ENCODE measurements at regions of chr22 and their contacts with region 1.

Region 1: GRCh38 chr22:30667494-30668385 is at the start of gene DUSP18:
- DNase-seq: peak; percentile 87 to 95 (median 92)
- ATAC-seq: peak; percentile 96
- H3K4me3 ChIP-seq: peak within 1 kb of the TSS; percentile 98
- H3K4me3 Mint-ChIP-seq: peak within 1 kb of the TSS; percentile 90 to 98 (median 95)
- H3K27ac ChIP-seq: peak within 1 kb of the TSS; percentile 71
- H3K27ac Mint-ChIP-seq: peak within 1 kb of the TSS; percentile 74 to 97 (median 91)
- H3K4me1 ChIP-seq: peaks cover 4 to 6% of the 10 kb centered on the region in 2 donors
- H3K4me1 Mint-ChIP-seq: peaks cover 17 to 30% (median 24%) of the 10 kb centered on the region in 7 donors
- H3K27me3 ChIP-seq: no peaks in the 10 kb centered on the region
- H3K27me3 Mint-ChIP-seq: peaks cover 0 to 4% (median 0%) of the 10 kb centered on the region in 5 donors
- total RNA-seq, gene DUSP18: 7.4 to 18.5 (median 14.1) TPM

Region 2: GRCh38 chr22:29837780-29838598 is 829.8 kb before region 1 on chr22 and contains the start of gene ASCC2:
- CTCF ChIA-PET with region 1: no interaction called
- POLR2A ChIA-PET with region 1: no interaction called
- intact Hi-C with region 1: loop called in 1 of 2 experiments (anchors 1 kb)
- DNase-seq: peak; percentile 93 to 98 (median 97)
- ATAC-seq: peak; percentile 100
- H3K4me3 ChIP-seq: peak within 1 kb of the TSS; percentile 98
- H3K4me3 Mint-ChIP-seq: peak within 1 kb of the TSS; percentile 89 to 99 (median 95)
- H3K27ac ChIP-seq: peak within 1 kb of the TSS; percentile 79
- H3K27ac Mint-ChIP-seq: peak within 1 kb of the TSS; percentile 94 to 99 (median 95)
- H3K4me1 ChIP-seq: peaks cover 12 to 22% of the 10 kb centered on the region in 2 donors
- H3K4me1 Mint-ChIP-seq: peaks cover 31 to 55% (median 45%) of the 10 kb centered on the region in 7 donors
- H3K27me3 ChIP-seq: no peaks in the 10 kb centered on the region
- H3K27me3 Mint-ChIP-seq: no peaks in the 10 kb centered on the region
- total RNA-seq, gene ASCC2: 90.2 to 101 (median 93.8) TPM

Region 3: GRCh38 chr22:30649430-30650007 is 18.2 kb before region 1 on chr22:
- CTCF ChIA-PET with region 1: no interaction called
- POLR2A ChIA-PET with region 1: interaction called, 3 read pairs
- intact Hi-C with region 1: loop called in 1 of 2 experiments (anchors 1 kb)
- DNase-seq: peak in 2 of 9 donors; percentile 16 to 88
- ATAC-seq: peak; percentile 95
- H3K4me3 ChIP-seq: no peak overlapping the region
- H3K4me3 Mint-ChIP-seq: peak overlapping the region in 1 of 10 donors; percentile 23
- H3K27ac ChIP-seq: no peak overlapping the region
- H3K27ac Mint-ChIP-seq: peak overlapping the region in 1 of 9 donors; percentile 87
- H3K4me1 ChIP-seq: no peaks in the 10 kb centered on the region
- H3K4me1 Mint-ChIP-seq: peaks cover 0 to 34% (median 0%) of the 10 kb centered on the region in 7 donors
- H3K27me3 ChIP-seq: no peaks in the 10 kb centered on the region
- H3K27me3 Mint-ChIP-seq: no peaks in the 10 kb centered on the region

Region 4: GRCh38 chr22:30694171-30694639 is 26.5 kb after region 1 on chr22:
- CTCF ChIA-PET with region 1: no interaction called
- POLR2A ChIA-PET with region 1: interaction called, 4 read pairs
- intact Hi-C with region 1: loop called (anchors 1 kb)
- DNase-seq: peak; percentile 40 to 62 (median 50)
- ATAC-seq: peak; percentile 83
- H3K4me3 ChIP-seq: peak overlapping the region; percentile 77
- H3K4me3 Mint-ChIP-seq: peak overlapping the region; percentile 86 to 98 (median 94)
- H3K27ac ChIP-seq: peak overlapping the region; percentile 57
- H3K27ac Mint-ChIP-seq: peak overlapping the region in 8 of 9 donors; percentile 59 to 92 (median 86)
- H3K4me1 ChIP-seq: peaks cover 6 to 7% of the 10 kb centered on the region in 2 donors
- H3K4me1 Mint-ChIP-seq: peaks cover 0 to 29% (median 19%) of the 10 kb centered on the region in 7 donors
- H3K27me3 ChIP-seq: no peaks in the 10 kb centered on the region
- H3K27me3 Mint-ChIP-seq: peaks cover 0 to 38% (median 4%) of the 10 kb centered on the region in 5 donors

Region 5: GRCh38 chr22:30754971-30755756 is 87.4 kb after region 1 on chr22:
- CTCF ChIA-PET with region 1: no interaction called
- POLR2A ChIA-PET with region 1: no interaction called
- intact Hi-C with region 1: loop called in 1 of 2 experiments (anchors 1 kb)
- DNase-seq: peak in 8 of 9 donors; percentile 12 to 44 (median 30)
- ATAC-seq: peak; percentile 67
- H3K4me3 ChIP-seq: no peak overlapping the region
- H3K4me3 Mint-ChIP-seq: no peak overlapping the region
- H3K27ac ChIP-seq: no peak overlapping the region
- H3K27ac Mint-ChIP-seq: no peak overlapping the region
- H3K4me1 ChIP-seq: no peaks in the 10 kb centered on the region
- H3K4me1 Mint-ChIP-seq: peaks cover 0 to 3% (median 0%) of the 10 kb centered on the region in 7 donors
- H3K27me3 ChIP-seq: no peaks in the 10 kb centered on the region
- H3K27me3 Mint-ChIP-seq: peaks cover 0 to 4% (median 0%) of the 10 kb centered on the region in 5 donors

Region 6: DNA sequence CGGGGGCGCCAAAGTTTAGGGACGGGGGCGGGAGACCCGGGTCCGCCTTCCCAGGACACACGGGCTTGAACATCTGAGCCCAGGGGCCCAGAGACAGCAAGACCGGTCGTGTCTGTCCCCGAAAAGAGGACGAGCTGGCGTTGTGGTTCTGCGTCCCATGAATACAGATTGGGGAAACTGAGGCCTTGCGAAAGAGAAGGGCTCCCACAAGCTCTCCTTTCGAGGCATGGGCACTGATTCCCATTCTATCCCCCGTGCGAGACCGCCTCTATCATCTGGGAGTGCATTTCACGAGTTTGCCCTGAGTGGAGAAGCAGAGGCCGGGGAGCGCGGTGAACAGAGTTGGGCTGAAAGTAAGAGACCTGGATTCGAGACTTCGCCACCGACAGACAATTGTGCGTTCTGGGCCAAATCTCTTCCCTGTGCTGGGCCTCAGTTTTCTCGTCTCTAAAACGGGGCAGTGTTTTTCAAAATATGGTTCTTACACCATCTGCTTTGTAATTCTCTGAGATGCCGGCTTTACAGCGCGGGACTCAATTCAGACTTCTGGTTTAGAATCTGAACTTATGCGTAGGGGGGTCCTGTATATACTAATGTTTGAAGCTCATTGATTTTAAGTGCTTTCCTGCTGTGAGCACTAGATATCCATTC is 492.7 kb after region 1 on chr22:
- CTCF ChIA-PET with region 1: no interaction called
- POLR2A ChIA-PET with region 1: no interaction called
- intact Hi-C with region 1: loop called in 1 of 2 experiments (anchors 1 kb)
- DNase-seq: peak in 3 of 9 donors; percentile 5 to 26 (median 9)
- ATAC-seq: peak; percentile 47
- H3K4me3 ChIP-seq: peak overlapping the region; percentile 76
- H3K4me3 Mint-ChIP-seq: peak overlapping the region; percentile 87 to 100 (median 99)
- H3K27ac ChIP-seq: peak overlapping the region; percentile 74
- H3K27ac Mint-ChIP-seq: peak overlapping the region; percentile 91 to 100 (median 97)
- H3K4me1 ChIP-seq: peaks cover 12 to 17% of the 10 kb centered on the region in 2 donors
- H3K4me1 Mint-ChIP-seq: peaks cover 25 to 42% (median 35%) of the 10 kb centered on the region in 7 donors
- H3K27me3 ChIP-seq: no peaks in the 10 kb centered on the region
- H3K27me3 Mint-ChIP-seq: peaks cover 0 to 13% (median 0%) of the 10 kb centered on the region in 5 donors

Measured in naive thymus-derived CD4-positive, alpha-beta T cell (primary cell).